ENCODE measurements at regions of chr15 and their contacts with region 1.

Region 1: DNA sequence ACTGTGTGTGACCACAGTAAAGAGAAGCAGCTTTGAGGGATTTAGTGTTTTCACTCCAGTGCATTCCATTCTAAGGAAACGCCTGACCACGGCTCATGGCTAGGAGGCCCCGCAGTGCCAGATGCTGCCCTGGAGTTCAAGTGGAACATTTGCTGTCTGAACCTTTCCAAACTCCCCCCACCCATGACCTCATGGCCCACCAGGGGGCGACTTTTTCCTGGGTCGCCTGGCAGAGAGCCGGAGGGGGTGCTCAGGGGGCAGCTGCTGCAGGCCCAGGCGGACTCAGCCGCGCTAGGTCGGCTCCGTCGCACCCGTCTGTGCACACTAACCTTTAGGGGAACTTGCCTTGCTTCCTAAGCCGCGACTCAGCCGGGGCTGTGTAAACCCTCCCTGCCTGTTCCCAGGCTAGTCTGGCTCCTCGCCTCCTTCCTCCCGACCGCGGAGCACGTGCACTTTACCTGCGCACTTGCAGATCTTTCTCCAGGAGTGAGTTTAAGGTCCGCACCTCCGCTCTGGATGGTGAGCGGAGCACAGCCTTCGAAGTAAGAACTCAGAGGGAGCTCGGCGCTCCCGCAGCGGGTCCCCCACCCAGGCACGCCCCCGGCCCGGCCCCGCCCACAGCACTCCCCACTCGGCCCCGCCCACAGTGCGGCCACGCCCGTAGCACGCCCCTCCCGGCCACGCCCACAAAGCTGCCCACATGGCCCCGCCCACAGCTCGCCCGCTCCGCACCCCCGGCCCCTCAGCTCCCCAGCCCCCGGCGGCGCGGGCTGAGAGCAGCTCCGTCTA is at the start of gene OCA2:
- DNase-seq: peak; percentile 63
- H3K4me3 ChIP-seq: peak within 1 kb of the TSS in 3 of 4 donors; percentile 8 to 10 (median 9)
- H3K27ac ChIP-seq: peak within 1 kb of the TSS in 1 of 4 donors; percentile 6
- H3K4me1 ChIP-seq: peaks cover 0 to 43% (median 37%) of the 10 kb centered on the region in 4 donors
- H3K27me3 ChIP-seq: peaks cover 39 to 96% (median 66%) of the 10 kb centered on the region in 3 donors
- CTCF ChIP-seq: no peak
- EP300 ChIP-seq: no peak
- POLR2A ChIP-seq: no peak
- total RNA-seq, gene OCA2: 0.36 TPM in 1 of 4 donors, not detected in the others

Region 2: DNA sequence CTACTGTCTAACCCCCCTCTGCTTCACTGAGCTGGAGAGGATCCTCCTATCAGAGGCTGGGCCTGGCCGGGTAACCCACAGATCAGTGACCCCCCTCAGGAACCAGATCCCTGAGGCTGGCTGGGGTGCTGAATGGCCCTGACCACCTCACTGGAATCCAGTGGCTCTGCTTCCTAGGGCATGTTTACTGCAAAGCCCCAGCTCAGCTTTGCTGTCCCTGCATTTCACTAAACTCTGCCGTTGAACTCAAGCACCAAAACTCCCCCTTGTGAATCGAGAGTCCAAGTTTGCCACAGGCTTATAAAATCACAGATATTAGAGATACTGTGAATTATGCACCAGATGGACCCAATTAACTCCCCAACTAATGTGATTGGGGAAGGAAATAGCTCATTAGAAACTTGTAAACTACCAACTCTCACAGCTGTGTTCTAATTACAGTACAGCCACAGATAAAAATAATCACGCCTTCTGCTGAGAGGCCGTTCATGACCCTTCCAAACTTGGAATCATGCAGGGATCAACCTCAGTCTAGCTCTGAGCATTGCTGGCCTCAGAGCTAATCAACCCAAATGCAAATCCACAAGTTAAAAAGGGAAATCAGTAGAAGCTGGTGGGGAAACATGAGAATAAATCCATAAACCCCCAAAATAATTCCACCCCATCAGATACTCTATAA is 46.9 kb before region 1 on chr15:
- intact Hi-C with region 1: no loop called
- DNase-seq: no peak
- H3K4me3 ChIP-seq: no peak overlapping the region
- H3K27ac ChIP-seq: no peak overlapping the region
- H3K4me1 ChIP-seq: no peaks in the 10 kb centered on the region
- H3K27me3 ChIP-seq: no peaks in the 10 kb centered on the region
- CTCF ChIP-seq: no peak
- EP300 ChIP-seq: no peak
- POLR2A ChIP-seq: no peak

Region 3: GRCh38 chr15:28154283-28154682 is 55.3 kb after region 1 on chr15:
- intact Hi-C with region 1: no loop called
- DNase-seq: no peak
- H3K4me3 ChIP-seq: no peak overlapping the region
- H3K27ac ChIP-seq: no peak overlapping the region
- H3K4me1 ChIP-seq: no peaks in the 10 kb centered on the region
- H3K27me3 ChIP-seq: no peaks in the 10 kb centered on the region
- CTCF ChIP-seq: no peak
- EP300 ChIP-seq: no peak
- POLR2A ChIP-seq: no peak

Region 4: DNA sequence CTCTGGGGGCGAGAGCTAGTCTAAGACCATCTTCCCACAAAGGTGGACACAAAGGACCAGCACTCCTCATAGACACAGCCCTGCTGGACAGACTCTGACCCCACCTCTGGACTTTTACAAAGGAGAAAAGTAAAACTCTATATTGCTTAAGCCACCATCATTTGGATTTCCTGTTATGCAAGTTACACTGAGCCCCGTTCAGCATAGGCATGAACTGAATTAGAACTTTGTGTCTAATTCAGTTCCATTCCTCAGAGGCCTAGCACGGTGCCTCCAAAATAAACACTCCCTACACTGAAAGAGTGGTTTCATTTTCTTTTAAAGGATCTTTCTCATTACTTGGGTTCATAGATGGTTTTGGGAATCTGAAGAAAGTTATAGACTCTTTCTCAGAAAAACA is 79.3 kb after region 1 on chr15:
- intact Hi-C with region 1: loop called (anchors 10 kb)
- DNase-seq: no peak
- H3K4me3 ChIP-seq: no peak overlapping the region
- H3K27ac ChIP-seq: no peak overlapping the region
- H3K4me1 ChIP-seq: no peaks in the 10 kb centered on the region
- H3K27me3 ChIP-seq: no peaks in the 10 kb centered on the region
- CTCF ChIP-seq: no peak
- EP300 ChIP-seq: no peak
- POLR2A ChIP-seq: no peak

Measured in sigmoid colon (tissue), 7 donors.